ENCODE measurements at regions of chrX and their contacts with region 1.

Region 1: DNA sequence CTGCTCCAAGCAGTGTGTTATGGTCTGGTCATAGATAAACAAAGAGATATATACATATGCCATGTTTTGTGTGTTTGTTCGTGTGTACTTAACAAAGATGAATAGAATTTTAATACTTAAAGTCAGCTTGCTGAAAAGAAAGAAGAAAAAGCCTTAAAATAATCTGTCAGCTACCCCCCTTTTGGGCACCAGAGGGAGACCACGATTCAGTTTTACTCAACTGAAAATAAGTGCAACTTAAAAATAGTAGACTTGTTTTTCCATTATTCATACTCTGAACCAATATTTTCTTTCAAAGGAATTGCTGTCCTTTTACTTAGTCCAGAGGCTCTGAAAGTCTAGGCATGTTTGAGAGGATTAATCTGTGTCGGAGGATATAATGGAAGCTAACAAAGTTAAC is 181.7 kb upstream of the AGTR2 start:
- DNase-seq: no peak
- H3K4me3 ChIP-seq: no peak overlapping the region
- H3K27ac ChIP-seq: no peak overlapping the region
- H3K4me1 ChIP-seq: peaks cover 0 to 3% (median 2%) of the 10 kb centered on the region in 4 experiments; a peak in 4 of 7 replicates
- H3K27me3 ChIP-seq: no peaks in the 10 kb centered on the region
- CTCF ChIP-seq: peak in 2 of 3 experiments; percentile 28 to 36; a peak in 2 of 4 replicates
- EP300 ChIP-seq: no peak
- POLR2A ChIP-seq: no peak
- RAD21 ChIP-seq: peak; percentile 60 to 62

Region 2: GRCh38 chrX:115958484-115959359 is 30.1 kb before region 1 on chrX:
- CTCF ChIA-PET with region 1: interaction called, 12 read pairs
- POLR2A ChIA-PET with region 1: no interaction called
- DNase-seq: no peak
- H3K4me3 ChIP-seq: no peak overlapping the region
- H3K27ac ChIP-seq: no peak overlapping the region
- H3K4me1 ChIP-seq: no peaks in the 10 kb centered on the region; a peak in 1 of 7 replicates
- H3K27me3 ChIP-seq: no peaks in the 10 kb centered on the region
- CTCF ChIP-seq: peak in 1 of 3 experiments; percentile 23; a peak in 1 of 4 replicates
- EP300 ChIP-seq: no peak
- POLR2A ChIP-seq: no peak
- RAD21 ChIP-seq: peak; percentile 33 to 41

Region 3: GRCh38 chrX:116198810-116199209 is 210.0 kb after region 1 on chrX:
- CTCF ChIA-PET with region 1: interaction called, 10 read pairs
- POLR2A ChIA-PET with region 1: no interaction called
- DNase-seq: no peak
- H3K4me3 ChIP-seq: no peak overlapping the region
- H3K27ac ChIP-seq: no peak overlapping the region
- H3K4me1 ChIP-seq: no peaks in the 10 kb centered on the region
- H3K27me3 ChIP-seq: no peaks in the 10 kb centered on the region
- CTCF ChIP-seq: peak in 2 of 3 experiments; percentile 22 to 36; a peak in 2 of 4 replicates
- EP300 ChIP-seq: no peak
- POLR2A ChIP-seq: no peak
- RAD21 ChIP-seq: peak; percentile 30 to 36

Measured in H1 (cell line).